B cell (primary cell): ENCODE measurements at regions of chr11 and their contacts with region 1.

Region 1: GRCh38 chr11:66800720-66801428 is 42.4 kb upstream of the RCE1 start:
- DNase-seq: peak; percentile 62
- ATAC-seq: peak; percentile 75
- H3K4me3 ChIP-seq: peak overlapping the region in 1 of 5 experiments; percentile 5
- H3K4me3 Mint-ChIP-seq: peak overlapping the region; percentile 52
- H3K27ac ChIP-seq: peak overlapping the region; percentile 78 to 91
- H3K27ac Mint-ChIP-seq: peak overlapping the region; percentile 83
- H3K4me1 ChIP-seq: peaks cover 64 to 69% of the 10 kb centered on the region in 2 donors
- H3K4me1 Mint-ChIP-seq: peaks cover 54% of the 10 kb centered on the region
- H3K27me3 ChIP-seq: no peaks in the 10 kb centered on the region
- H3K27me3 Mint-ChIP-seq: no peaks in the 10 kb centered on the region
- CTCF ChIP-seq: no peak

Region 2: DNA sequence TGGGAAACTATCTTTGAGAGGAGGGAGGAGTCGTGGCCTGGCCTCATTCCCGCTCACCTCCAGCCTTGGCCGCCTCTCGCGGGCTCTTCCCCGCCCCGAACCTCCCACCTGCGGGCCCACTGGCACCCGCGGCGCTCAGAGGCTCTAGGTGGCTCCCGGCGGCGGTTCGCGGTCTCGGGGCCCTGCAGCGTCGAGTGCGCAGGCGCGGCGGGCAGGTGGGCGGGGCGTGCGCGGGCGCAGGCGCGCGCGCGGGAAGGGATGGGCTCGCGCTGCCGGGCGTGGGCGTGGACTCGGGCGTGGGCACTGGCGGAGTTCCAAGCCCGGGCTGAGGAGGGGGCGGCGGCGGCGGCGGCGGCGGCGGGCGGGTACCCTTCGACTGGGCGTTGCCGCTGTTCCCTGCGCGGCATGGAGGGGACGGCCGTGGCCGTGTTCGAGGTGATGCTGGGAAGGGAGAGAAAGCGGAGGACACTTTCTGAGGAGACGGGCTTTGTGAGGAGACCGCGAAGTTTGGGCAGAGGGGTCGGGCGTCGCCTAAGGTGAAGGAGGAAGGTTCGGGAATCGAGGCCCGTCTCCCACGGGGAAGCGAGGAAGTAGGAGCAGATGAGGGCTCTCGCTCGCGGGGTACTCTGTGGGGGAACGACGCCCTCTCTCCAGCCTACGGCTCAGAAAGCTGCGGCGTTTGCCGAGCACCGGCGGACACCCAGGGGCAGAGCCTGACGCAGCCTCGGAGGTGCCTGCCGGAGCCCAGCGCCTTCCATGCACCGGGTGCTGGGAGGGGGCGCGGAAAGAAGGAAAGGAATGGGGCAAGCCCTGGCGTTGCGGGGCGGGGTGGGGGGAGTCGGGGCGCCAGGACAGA is 56.2 kb before region 1 on chr11:
- CTCF ChIA-PET with region 1: interaction called, 3 read pairs
- POLR2A ChIA-PET with region 1: interaction called, 3 read pairs
- intact Hi-C with region 1: loop called (anchors 2 kb)
- DNase-seq: peak; percentile 95
- ATAC-seq: peak; percentile 88
- H3K4me3 ChIP-seq: peak overlapping the region; percentile 70 to 97 (median 95)
- H3K4me3 Mint-ChIP-seq: peak overlapping the region; percentile 96
- H3K27ac ChIP-seq: peak overlapping the region; percentile 68 to 88
- H3K27ac Mint-ChIP-seq: peak overlapping the region; percentile 94
- H3K4me1 ChIP-seq: peaks cover 7 to 16% of the 10 kb centered on the region in 2 donors
- H3K4me1 Mint-ChIP-seq: peaks cover 32% of the 10 kb centered on the region
- H3K27me3 ChIP-seq: no peaks in the 10 kb centered on the region
- H3K27me3 Mint-ChIP-seq: no peaks in the 10 kb centered on the region
- CTCF ChIP-seq: no peak